ENCODE measurements at regions of chr14 and their contacts with region 1.

Region 1: GRCh38 chr14:63993992-63994391 is 141.2 kb downstream of the SYNE2 start:
- DNase-seq: no peak
- ATAC-seq: no peak
- H3K4me3 ChIP-seq: no peak overlapping the region
- H3K27ac ChIP-seq: no peak overlapping the region
- H3K4me1 ChIP-seq: no peaks in the 10 kb centered on the region
- H3K27me3 ChIP-seq: no peaks in the 10 kb centered on the region
- CTCF ChIP-seq: peak in 7 of 9 donors; percentile 22 to 51 (median 31)

Region 2: GRCh38 chr14:63248211-63248610 is 745.8 kb before region 1 on chr14:
- intact Hi-C with region 1: no loop called
- DNase-seq: no peak
- ATAC-seq: peak in 6 of 8 donors; percentile 45 to 73 (median 54)
- H3K4me3 ChIP-seq: no peak overlapping the region
- H3K27ac ChIP-seq: peak overlapping the region in 4 of 10 donors; percentile 7 to 46 (median 32)
- H3K4me1 ChIP-seq: peaks cover 0 to 40% (median 13%) of the 10 kb centered on the region in 9 donors
- H3K27me3 ChIP-seq: no peaks in the 10 kb centered on the region
- CTCF ChIP-seq: no peak

Region 3: DNA sequence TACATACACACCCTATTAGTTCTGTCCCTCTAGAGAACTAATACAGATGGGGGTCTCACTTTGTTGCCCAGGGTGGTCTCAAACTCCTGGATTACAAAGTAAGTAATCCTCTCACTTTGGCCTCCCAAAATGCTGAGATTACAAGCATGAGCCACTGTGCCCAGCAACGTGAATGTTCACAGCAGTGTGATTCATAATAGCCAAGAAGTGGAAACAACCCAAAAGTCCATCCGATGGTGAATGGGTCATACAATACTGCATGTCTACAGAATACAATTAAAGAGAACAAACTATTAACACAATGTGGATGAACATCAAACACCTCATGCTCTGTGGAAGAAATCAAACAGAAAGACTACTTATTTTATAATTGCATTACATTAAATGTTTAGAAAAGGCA is 198.5 kb before region 1 on chr14:
- intact Hi-C with region 1: loop called in 3 of 10 experiments (anchors 10 kb)
- DNase-seq: no peak
- ATAC-seq: no peak
- H3K4me3 ChIP-seq: no peak overlapping the region
- H3K27ac ChIP-seq: no peak overlapping the region
- H3K4me1 ChIP-seq: peaks cover 0 to 9% (median 0%) of the 10 kb centered on the region in 9 donors
- H3K27me3 ChIP-seq: no peaks in the 10 kb centered on the region
- CTCF ChIP-seq: no peak

Region 4: GRCh38 chr14:63800651-63801375 is 193.2 kb before region 1 on chr14:
- intact Hi-C with region 1: loop called in 3 of 10 experiments (anchors 10 kb)
- DNase-seq: no peak
- ATAC-seq: no peak
- H3K4me3 ChIP-seq: no peak overlapping the region
- H3K27ac ChIP-seq: no peak overlapping the region
- H3K4me1 ChIP-seq: peaks cover 0 to 9% (median 0%) of the 10 kb centered on the region in 9 donors
- H3K27me3 ChIP-seq: no peaks in the 10 kb centered on the region
- CTCF ChIP-seq: no peak

Region 5: GRCh38 chr14:63972323-63972932 is 21.6 kb before region 1 on chr14:
- intact Hi-C with region 1: no loop called
- DNase-seq: no peak
- ATAC-seq: no peak
- H3K4me3 ChIP-seq: no peak overlapping the region
- H3K27ac ChIP-seq: no peak overlapping the region
- H3K4me1 ChIP-seq: no peaks in the 10 kb centered on the region
- H3K27me3 ChIP-seq: no peaks in the 10 kb centered on the region
- CTCF ChIP-seq: no peak

Region 6: GRCh38 chr14:64060648-64061096 is 66.7 kb after region 1 on chr14:
- intact Hi-C with region 1: no loop called
- DNase-seq: no peak
- ATAC-seq: peak in 1 of 8 donors; percentile 27
- H3K4me3 ChIP-seq: no peak overlapping the region
- H3K27ac ChIP-seq: no peak overlapping the region
- H3K4me1 ChIP-seq: no peaks in the 10 kb centered on the region
- H3K27me3 ChIP-seq: no peaks in the 10 kb centered on the region
- CTCF ChIP-seq: peak in 7 of 9 donors; percentile 14 to 41 (median 26)

Measured in heart right ventricle (tissue), 16 donors.